Activated T-helper 1 cell treated with anti-CD3 and anti-CD28 coated beads, Interleukin-12 subunit alpha, Interleukin-12 subunit beta, Interleukin-2, Interleukin-4 antibody, amounts not matched to agents 30 ng/mL and 10 ng/mL and 1 ng/mL, durations not matched to agents 14 hours and 24 hours and 36 hours (primary cell): ENCODE measurements at regions of chr3 and their contacts with region 1.

Region 1: DNA sequence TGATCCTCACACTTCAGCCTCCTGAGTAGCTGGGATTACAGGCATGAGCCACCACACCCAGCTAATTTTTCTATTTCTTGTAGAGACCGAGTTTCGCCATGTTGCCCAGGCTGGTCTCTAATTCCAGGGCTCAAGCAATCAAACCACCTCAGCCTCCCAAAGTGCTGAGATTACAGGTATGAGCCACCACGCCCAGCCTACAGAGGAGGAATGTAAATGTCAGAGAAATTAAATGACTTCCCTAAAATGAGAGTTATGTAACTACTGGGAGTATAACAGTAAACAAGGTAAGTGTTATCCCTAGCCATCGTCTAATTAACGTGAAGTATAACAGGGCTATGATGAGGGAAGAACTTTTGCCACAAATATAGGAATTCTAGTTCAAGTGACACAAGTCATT is 65.6 kb downstream of the ACAP2 start:
- DNase-seq: no peak
- H3K4me3 Mint-ChIP-seq: no peak overlapping the region
- H3K27ac Mint-ChIP-seq: no peak overlapping the region
- H3K4me1 Mint-ChIP-seq: no peaks in the 10 kb centered on the region
- H3K27me3 Mint-ChIP-seq: no peaks in the 10 kb centered on the region

Region 2: DNA sequence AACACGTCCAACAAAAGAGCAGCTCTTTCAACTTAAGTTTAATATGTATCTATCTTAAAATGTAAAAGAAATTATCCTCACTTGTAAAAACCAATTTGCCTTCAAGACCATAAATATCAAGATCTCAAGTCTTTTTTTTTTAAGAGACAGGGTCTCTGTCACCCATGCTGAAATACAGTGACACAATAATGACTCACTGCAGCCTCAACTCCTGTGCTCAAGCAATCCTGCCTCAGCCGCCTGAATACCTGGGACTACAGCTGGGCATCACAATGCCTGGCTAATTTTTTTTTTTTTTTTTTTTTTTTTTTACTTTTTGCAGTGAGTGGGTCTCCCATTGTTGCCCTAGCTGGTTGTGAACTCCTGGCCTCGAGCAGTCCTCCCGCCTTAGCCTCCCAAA is 39.5 kb after region 1 on chr3:
- intact Hi-C with region 1: loop called (anchors 2 kb)
- DNase-seq: no peak
- H3K4me3 Mint-ChIP-seq: no peak overlapping the region
- H3K27ac Mint-ChIP-seq: no peak overlapping the region
- H3K4me1 Mint-ChIP-seq: peaks cover 14% of the 10 kb centered on the region
- H3K27me3 Mint-ChIP-seq: no peaks in the 10 kb centered on the region

Region 3: DNA sequence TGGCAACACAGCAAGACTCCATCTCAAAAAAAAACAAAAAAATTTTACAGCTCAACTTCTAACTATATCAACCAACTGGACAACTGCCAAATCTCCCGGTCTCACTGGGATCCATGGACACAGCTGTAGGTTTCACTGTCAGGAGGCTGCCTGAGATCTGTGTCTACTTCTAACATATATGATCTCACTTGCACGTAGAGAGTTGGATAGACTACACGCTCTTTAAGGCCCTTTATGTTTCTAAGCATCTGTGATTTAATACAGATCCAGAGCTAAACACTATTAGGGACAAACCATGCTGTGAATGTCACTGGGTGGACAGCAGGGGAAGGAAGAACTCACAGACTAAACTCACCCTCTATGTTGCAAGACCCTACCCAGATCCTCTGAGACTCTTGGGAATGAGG is 219.5 kb after region 1 on chr3:
- intact Hi-C with region 1: no loop called
- DNase-seq: no peak
- H3K4me3 Mint-ChIP-seq: no peak overlapping the region
- H3K27ac Mint-ChIP-seq: no peak overlapping the region
- H3K4me1 Mint-ChIP-seq: peaks cover 13% of the 10 kb centered on the region
- H3K27me3 Mint-ChIP-seq: peaks cover 3% of the 10 kb centered on the region

Region 4: GRCh38 chr3:196423044-196423781 is 1046.0 kb after region 1 on chr3:
- intact Hi-C with region 1: no loop called
- DNase-seq: no peak
- H3K4me3 Mint-ChIP-seq: no peak overlapping the region
- H3K27ac Mint-ChIP-seq: no peak overlapping the region
- H3K4me1 Mint-ChIP-seq: peaks cover 27% of the 10 kb centered on the region
- H3K27me3 Mint-ChIP-seq: no peaks in the 10 kb centered on the region